Psoas muscle (tissue), 8 donors: ENCODE measurements at regions of chr13 and their contacts with region 1.

Region 1: GRCh38 chr13:30114571-30115256 is 192.6 kb downstream of the KATNAL1 start:
- DNase-seq: peak; percentile 90 to 94
- ATAC-seq: peak; percentile 90 to 97 (median 94)
- H3K4me3 ChIP-seq: peak overlapping the region; percentile 77
- H3K27ac ChIP-seq: peak overlapping the region; percentile 41
- H3K4me1 ChIP-seq: peaks cover 12% of the 10 kb centered on the region
- H3K27me3 ChIP-seq: no peaks in the 10 kb centered on the region
- CTCF ChIP-seq: peak; percentile 93

Region 2: GRCh38 chr13:29508130-29508875 is 606.4 kb before region 1 on chr13:
- intact Hi-C with region 1: loop called (anchors 1 to 2 kb)
- DNase-seq: peak; percentile 83 to 91
- ATAC-seq: peak; percentile 82 to 96 (median 88)
- H3K4me3 ChIP-seq: no peak overlapping the region
- H3K27ac ChIP-seq: no peak overlapping the region
- H3K4me1 ChIP-seq: peaks cover 5% of the 10 kb centered on the region
- H3K27me3 ChIP-seq: peaks cover 0 to 38% (median 13%) of the 10 kb centered on the region in 3 donors
- CTCF ChIP-seq: peak; percentile 97

Region 3: DNA sequence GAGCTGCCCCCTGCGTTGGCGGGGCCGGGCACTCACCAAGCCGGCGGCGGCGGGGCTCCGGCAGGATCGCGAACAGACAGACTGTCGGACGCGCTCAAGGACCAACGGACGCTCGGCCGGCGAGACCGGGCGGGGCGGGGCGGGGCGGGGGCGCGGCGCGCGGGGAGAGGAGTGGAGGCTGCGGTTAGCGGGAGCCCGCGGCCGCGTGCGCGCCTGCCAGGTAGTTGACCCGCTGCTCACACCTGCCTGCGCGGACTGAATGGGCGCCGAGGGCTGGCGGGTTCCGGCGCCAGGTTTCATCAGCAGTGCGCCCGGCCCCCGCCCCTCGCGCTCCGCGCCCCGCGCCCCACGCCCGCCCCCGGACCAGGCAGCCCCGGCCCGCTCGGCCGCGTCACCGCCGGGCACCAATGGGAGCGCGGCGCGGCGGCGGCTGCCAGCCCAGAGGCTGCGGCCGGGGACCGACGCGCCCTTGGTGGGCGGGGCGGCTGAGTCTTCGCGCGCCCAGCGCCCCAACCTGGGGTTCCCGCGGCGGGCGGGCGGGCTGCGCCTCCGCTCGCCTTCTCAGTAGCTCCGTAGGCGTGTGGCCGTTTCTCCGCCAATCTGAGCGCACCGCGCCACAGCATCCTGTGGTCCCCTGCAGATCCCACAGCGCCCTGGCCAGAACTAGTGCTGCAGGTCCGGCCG is 519.2 kb before region 1 on chr13 and contains the start of gene SLC7A1:
- intact Hi-C with region 1: loop called in 1 of 2 experiments (anchors 10 kb)
- DNase-seq: peak; percentile 76 to 80
- ATAC-seq: peak; percentile 80 to 89 (median 86)
- H3K4me3 ChIP-seq: peak within 1 kb of the TSS; percentile 79
- H3K27ac ChIP-seq: peak within 1 kb of the TSS; percentile 72
- H3K4me1 ChIP-seq: peaks cover 7% of the 10 kb centered on the region
- H3K27me3 ChIP-seq: peaks cover 0 to 35% (median 7%) of the 10 kb centered on the region in 3 donors
- CTCF ChIP-seq: no peak
- total RNA-seq, gene SLC7A1: 2.5 to 14.7 (median 3.8) TPM

Region 4: DNA sequence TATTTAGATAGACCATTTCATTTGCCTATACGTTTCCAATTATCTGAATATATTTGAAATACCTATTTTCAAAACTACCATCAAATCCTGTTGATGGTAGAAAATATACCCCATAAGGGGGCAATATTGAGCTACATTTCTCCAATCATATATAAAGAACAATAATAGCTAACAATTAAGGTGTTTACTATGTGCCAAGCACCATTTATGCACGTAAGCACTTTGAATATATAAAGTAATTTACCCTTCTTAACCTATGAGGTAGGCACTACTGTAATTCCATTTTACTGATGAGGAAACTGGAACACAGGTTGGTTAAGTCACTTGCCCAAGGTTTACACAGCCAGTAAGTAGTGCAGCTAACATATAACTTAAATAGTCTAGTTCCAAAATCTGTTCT is 343.5 kb before region 1 on chr13:
- intact Hi-C with region 1: loop called (anchors 1 to 5 kb)
- DNase-seq: no peak
- ATAC-seq: peak in 2 of 4 donors; percentile 35 to 67
- H3K4me3 ChIP-seq: no peak overlapping the region
- H3K27ac ChIP-seq: no peak overlapping the region
- H3K4me1 ChIP-seq: no peaks in the 10 kb centered on the region
- H3K27me3 ChIP-seq: no peaks in the 10 kb centered on the region
- CTCF ChIP-seq: peak; percentile 62

Region 5: DNA sequence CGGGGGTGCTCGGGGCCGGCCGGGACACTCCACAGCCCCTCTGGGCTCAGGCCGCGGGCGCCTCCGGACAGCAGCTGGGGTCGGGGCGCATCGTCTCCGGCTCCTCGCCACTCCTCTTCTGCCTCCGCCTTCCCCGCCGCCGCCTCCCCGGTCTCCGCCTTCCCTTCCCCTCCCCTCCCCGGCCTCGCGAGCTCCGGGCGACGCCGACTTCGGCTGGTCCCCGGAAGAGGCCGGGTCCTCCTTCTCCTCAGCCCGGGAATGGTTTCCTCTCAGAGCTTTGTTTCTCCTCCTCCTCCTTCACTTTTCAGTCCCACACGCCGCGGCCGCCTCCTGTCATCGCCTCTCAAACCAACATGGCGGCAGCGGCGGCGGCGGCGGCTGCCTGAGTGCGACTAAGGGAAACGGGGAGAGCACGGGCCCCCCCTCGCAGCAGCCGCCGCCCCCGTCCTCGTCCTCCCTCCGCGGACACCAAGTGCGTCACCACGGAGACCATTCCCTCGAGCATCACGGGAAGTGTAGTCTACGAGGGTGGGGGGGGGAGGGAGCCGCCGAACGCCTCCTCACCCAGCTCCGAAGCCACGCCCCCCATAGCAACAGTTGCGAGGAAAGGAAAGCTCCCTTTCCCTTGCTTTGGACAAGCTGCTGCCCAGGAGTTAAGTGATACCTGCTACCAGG is 264.4 kb before region 1 on chr13 and contains the start of gene UBL3:
- intact Hi-C with region 1: loop called (anchors 2 to 5 kb)
- DNase-seq: peak; percentile 96 to 98
- ATAC-seq: peak; percentile 95 to 98 (median 97)
- H3K4me3 ChIP-seq: peak within 1 kb of the TSS; percentile 92
- H3K27ac ChIP-seq: peak within 1 kb of the TSS; percentile 99
- H3K4me1 ChIP-seq: peaks cover 27% of the 10 kb centered on the region
- H3K27me3 ChIP-seq: no peaks in the 10 kb centered on the region
- CTCF ChIP-seq: no peak
- total RNA-seq, gene UBL3: 20.7 to 26.2 (median 24.5) TPM

Region 6: GRCh38 chr13:30422054-30422839 is 307.5 kb after region 1 on chr13 and contains the start of gene UBE2L5:
- intact Hi-C with region 1: no loop called
- DNase-seq: peak; percentile 83 to 89
- ATAC-seq: peak; percentile 90 to 95 (median 92)
- H3K4me3 ChIP-seq: peak within 1 kb of the TSS; percentile 64
- H3K27ac ChIP-seq: peak within 1 kb of the TSS; percentile 95
- H3K4me1 ChIP-seq: peaks cover 11% of the 10 kb centered on the region
- H3K27me3 ChIP-seq: no peaks in the 10 kb centered on the region
- CTCF ChIP-seq: no peak
- total RNA-seq, gene UBE2L5: not detected